Head of caudate nucleus (tissue), 42 donors: ENCODE measurements at regions of chr9 and their contacts with region 1.

Region 1: GRCh38 chr9:126781186-126782052 is 23.4 kb upstream of the ZBTB43 start:
- DNase-seq: peak; percentile 76 to 96 (median 88)

Region 2: GRCh38 chr9:126500684-126501382 is 280.6 kb before region 1 on chr9:
- intact Hi-C with region 1: loop called (anchors 5 kb)
- DNase-seq: peak; percentile 69 to 94 (median 88)

Region 3: DNA sequence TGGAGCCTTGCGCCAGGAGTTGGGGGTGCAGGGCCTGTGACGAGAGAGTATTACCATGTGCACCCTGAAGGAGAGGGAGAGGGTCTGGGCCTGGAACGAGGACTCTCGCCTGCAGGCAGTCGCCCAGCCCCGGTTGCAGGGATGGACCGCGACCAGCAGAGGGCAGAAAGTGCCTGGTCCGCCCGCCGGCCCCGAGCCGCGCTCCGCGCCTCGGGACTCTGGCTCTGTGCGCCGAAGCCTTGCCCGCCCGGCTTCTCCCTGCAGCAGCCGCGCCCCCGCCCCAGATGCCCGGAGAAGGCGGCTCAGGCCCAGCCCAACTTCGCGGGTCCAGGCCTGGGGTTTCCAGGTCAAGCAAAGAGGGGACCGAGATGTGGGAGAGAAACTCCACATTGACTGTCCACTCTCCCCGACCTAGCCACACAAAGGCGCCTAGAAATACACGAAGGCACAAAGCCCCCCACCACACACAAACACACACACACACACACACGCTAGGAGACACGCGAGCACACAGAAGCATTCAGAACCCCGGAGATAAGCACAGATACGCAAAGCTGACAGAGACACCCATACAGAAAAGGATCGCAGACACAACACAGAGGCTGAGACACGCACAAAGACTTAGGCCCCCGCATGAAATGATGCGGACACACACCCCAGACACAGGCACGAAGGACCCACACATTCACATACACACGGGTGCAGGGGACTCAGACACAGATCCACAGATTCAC is 169.7 kb before region 1 on chr9:
- intact Hi-C with region 1: loop called (anchors 10 kb)
- DNase-seq: peak; percentile 51 to 89 (median 76)

Region 4: DNA sequence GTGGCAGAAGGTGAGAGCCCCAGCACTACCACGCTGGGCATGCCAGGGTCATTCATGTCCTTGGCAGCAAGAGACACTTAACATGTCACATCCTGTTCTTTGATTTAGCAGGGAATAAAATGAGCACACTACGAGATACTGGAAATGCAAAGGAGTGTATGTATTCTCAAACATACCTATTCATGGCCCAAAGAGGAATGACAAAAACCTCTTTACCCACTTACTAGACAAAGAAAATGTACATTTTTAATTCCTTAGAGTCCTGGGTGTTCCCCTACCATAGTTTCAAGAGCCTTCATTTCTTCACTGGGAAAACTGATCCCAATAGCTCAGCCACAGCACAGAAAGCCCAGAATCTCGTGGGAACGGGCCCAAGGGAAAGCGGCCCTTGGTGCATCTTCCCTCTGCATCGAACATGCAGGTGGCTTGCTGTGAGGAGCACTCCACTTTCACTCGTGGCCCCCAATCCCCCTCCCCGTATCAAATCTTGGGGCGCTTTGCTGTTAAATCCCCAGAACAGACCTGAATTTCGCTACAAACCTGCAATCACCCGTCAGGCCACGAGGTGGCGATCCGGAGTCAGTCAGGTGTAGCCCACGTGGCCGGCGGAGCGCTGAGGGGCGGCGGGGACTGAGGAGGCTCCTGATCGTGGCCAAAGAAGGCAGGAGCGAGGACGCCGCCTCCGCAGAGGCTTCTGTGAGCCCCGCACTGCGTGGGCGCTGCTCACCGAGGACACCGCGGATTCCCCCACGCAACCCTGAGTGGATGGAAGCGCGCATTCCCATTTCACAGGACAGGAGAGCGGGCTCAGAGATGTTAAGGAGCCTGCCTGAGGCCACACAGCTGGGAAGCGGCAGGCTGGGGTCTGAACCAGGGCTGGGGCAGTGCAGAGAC is 76.3 kb before region 1 on chr9:
- intact Hi-C with region 1: loop called (anchors 5 kb)
- DNase-seq: peak; percentile 64 to 91 (median 83)